Activated T-helper 1 cell treated with anti-CD3 and anti-CD28 coated beads, Interleukin-12 subunit alpha, Interleukin-12 subunit beta, Interleukin-2, Interleukin-4 antibody, amounts not matched to agents 30 ng/mL and 10 ng/mL and 1 ng/mL, durations not matched to agents 14 hours and 24 hours and 36 hours (primary cell): ENCODE measurements at regions of chr6 and their contacts with region 1.

Region 1: DNA sequence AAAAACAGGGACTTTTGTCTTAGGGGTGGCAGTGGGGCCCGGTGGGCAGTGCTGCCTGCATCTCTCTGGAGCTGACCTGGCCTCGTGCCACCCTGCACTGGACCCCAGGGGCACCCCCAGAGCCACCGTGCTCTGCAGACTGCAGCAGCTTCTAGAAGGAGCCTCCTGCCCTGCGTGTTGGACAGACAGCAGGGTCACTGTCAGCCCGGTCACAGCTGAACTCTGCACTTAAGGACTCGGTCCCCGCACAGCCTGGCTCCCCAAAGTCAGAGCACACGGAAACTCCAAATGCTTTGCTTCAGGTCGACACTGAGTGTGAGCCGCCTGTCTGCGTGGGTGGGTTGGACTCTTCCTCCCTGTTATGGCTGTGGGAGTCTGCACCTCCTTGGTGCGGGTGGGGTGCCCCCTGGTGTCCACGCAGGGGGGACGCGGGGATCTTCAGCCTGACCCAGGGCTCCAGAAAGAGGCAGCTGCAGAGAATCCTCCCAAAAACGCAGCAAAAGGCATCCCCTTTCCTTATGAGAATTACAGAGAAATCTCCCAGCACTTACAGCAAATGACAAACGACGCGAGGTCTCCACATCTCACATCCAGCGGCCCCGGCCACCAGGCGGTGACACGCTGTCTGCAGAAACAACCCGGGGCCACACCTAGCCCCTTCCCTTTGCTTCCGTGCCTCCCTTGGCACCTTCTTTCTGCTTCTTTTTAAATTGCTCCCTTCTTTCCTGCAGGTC is 36.3 kb upstream of the DACT2 start:
- DNase-seq: no peak
- H3K4me3 Mint-ChIP-seq: no peak overlapping the region
- H3K27ac Mint-ChIP-seq: no peak overlapping the region
- H3K4me1 Mint-ChIP-seq: peaks cover 4% of the 10 kb centered on the region
- H3K27me3 Mint-ChIP-seq: no peaks in the 10 kb centered on the region

Region 2: DNA sequence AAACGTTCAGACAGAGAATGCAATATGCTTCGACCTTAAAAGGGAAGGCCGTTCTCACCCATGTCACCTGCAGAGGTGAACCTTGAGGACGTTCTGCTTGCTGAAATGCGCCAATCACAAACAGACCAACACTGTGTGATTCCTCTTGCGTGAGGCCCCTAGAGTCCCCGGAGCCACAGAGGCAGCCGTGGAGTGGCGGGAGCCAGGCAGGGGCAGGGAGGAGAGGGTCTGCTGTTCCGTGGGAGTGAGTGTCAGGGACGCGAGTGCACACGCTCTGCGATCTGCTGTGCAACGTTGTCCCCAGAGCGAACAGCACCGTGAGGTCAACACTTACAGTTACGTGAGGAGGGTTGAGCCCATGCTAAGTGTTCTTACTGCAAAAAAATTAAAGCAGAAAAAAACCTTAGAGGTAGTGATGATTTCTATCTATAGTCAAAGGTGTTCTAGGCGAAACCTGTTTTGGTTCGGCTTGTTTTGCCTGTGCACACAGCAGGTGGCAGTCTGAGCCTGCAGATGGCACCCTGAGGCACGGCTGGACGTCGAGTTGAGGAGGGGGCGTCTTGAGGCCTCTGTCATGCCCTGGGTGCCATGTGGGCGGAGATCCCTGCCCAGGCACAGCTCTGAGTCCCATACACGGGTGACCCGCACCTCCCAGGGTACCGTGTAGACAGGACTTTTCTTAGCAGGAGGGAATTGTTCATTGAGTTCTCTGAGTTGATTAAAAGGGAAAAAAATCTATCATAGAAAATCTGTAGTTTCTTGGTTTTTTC is 205.1 kb before region 1 on chr6:
- intact Hi-C with region 1: loop called (anchors 5 kb)
- DNase-seq: no peak
- H3K4me3 Mint-ChIP-seq: no peak overlapping the region
- H3K27ac Mint-ChIP-seq: no peak overlapping the region
- H3K4me1 Mint-ChIP-seq: no peaks in the 10 kb centered on the region
- H3K27me3 Mint-ChIP-seq: no peaks in the 10 kb centered on the region

Region 3: DNA sequence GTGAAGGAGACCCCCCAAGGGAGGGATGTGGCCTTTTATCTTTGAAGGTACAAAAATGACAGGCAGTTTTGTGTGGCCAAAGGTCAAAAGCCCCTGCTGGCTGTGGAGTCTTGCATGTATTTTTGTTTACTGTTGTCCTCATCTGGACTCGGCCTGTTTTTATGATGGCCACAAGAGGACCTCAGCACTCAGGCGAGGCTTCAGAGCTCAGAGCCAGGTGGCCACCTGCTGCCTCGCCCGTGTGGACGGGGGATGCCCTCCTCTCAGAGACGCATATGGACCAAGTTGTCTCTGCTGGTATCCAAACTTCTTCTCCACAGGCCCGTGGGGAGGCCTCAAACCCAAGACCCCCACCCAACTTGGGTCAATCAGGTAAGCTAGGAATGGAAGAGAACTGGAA is 154.5 kb before region 1 on chr6:
- intact Hi-C with region 1: loop called (anchors 2 kb)
- DNase-seq: no peak
- H3K4me3 Mint-ChIP-seq: no peak overlapping the region
- H3K27ac Mint-ChIP-seq: no peak overlapping the region
- H3K4me1 Mint-ChIP-seq: no peaks in the 10 kb centered on the region
- H3K27me3 Mint-ChIP-seq: peaks cover 4% of the 10 kb centered on the region

Region 4: DNA sequence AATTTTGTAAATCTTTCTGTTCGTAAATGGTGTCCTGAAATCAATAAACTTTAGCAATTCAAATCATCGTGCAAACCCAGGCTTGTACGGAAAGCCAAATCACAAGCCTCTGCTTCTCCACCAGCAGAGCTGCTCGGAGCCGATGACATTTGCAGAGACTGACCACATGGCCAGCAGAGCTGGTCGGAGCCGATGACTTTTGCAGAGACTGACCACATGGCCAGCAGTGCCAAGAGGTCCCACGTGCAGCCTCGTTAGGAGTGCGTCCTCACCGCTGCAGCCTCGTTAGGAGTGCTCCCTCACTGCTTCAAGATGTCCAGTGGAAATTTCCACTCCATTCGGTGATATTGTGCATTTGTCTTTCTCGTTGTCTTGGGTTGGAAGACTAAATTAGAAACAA is 113.6 kb after region 1 on chr6:
- intact Hi-C with region 1: no loop called
- DNase-seq: no peak
- H3K4me3 Mint-ChIP-seq: no peak overlapping the region
- H3K27ac Mint-ChIP-seq: no peak overlapping the region
- H3K4me1 Mint-ChIP-seq: no peaks in the 10 kb centered on the region
- H3K27me3 Mint-ChIP-seq: no peaks in the 10 kb centered on the region